Activated CD4-positive, alpha-beta T cell treated with anti-CD3 and anti-CD28 coated beads for 36 hours (primary cell): ENCODE measurements at regions of chr14 and their contacts with region 1.

Region 1: GRCh38 chr14:77067632-77068514 is 30.2 kb upstream of the CIPC start:
- DNase-seq: peak; percentile 80
- ATAC-seq: peak; percentile 74
- H3K4me3 Mint-ChIP-seq: no peak overlapping the region
- H3K27ac Mint-ChIP-seq: no peak overlapping the region
- H3K4me1 Mint-ChIP-seq: no peaks in the 10 kb centered on the region
- H3K27me3 Mint-ChIP-seq: no peaks in the 10 kb centered on the region

Region 2: GRCh38 chr14:76710056-76711010 is 357.5 kb before region 1 on chr14:
- CTCF ChIA-PET with region 1: interaction called, 17 read pairs
- POLR2A ChIA-PET with region 1: no interaction called
- intact Hi-C with region 1: loop called (anchors 2 kb)
- DNase-seq: peak; percentile 51
- ATAC-seq: peak; percentile 49
- H3K4me3 Mint-ChIP-seq: no peak overlapping the region
- H3K27ac Mint-ChIP-seq: no peak overlapping the region
- H3K4me1 Mint-ChIP-seq: no peaks in the 10 kb centered on the region
- H3K27me3 Mint-ChIP-seq: peaks cover 7% of the 10 kb centered on the region

Region 3: DNA sequence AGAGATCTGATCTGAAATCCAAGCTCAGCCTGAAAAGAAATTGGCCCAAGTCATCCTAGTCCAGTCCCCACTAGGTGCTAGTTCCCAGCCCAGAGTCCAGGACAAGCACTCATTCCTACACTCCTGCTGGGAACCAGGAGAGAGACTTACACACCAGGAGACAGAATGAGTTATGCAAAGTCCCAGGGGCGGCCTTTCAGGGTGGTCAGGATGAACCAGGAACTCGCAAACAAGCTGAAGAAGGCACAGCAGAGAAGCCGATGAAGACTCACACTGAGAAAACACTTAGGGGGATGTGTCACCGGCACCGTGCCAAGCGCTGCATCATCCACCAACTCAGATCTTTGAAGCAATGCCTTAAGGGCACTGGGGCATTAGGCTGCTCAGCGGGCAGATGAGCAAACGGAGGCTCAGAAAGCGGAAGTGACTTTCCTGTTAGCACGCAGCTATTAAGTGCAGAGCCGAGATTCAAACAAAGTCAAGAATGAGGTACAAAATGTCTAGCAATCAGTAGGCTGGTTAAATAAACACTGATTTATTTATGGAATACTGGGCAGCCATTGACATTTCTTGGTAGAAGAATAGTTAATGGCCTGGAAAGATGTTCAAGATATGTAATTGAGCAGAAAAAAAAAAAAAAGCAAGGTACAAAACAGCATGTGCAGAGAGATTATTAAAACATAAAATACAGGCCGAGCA is 163.0 kb before region 1 on chr14:
- CTCF ChIA-PET with region 1: interaction called, 23 read pairs
- POLR2A ChIA-PET with region 1: no interaction called
- intact Hi-C with region 1: no loop called
- DNase-seq: peak; percentile 94
- ATAC-seq: peak; percentile 97
- H3K4me3 Mint-ChIP-seq: no peak overlapping the region
- H3K27ac Mint-ChIP-seq: peak overlapping the region; percentile 80
- H3K4me1 Mint-ChIP-seq: peaks cover 31% of the 10 kb centered on the region
- H3K27me3 Mint-ChIP-seq: no peaks in the 10 kb centered on the region

Region 4: DNA sequence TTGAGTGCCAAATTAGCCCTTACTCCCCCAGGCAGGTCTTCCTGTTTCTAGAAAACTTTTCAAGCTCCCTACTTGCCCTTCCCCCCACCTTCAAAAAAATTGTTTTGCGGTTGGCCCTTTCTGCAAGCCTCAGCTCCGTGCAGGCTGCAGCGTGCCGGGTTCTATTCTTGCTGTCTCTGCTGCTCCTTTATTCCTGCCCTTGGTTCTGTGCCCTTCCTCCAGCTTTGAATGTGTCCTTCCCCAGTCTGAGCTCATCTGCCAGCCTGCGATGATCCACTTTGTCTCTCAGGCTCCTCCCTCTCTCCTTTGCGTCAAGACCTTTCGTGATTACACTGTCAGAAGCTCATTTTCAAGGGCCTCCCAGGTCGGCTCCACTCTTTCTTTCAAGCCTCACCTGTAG is 137.9 kb before region 1 on chr14:
- CTCF ChIA-PET with region 1: interaction called, 12 read pairs
- POLR2A ChIA-PET with region 1: no interaction called
- intact Hi-C with region 1: no loop called
- DNase-seq: peak; percentile 79
- ATAC-seq: peak; percentile 91
- H3K4me3 Mint-ChIP-seq: peak overlapping the region; percentile 49
- H3K27ac Mint-ChIP-seq: peak overlapping the region; percentile 80
- H3K4me1 Mint-ChIP-seq: peaks cover 83% of the 10 kb centered on the region
- H3K27me3 Mint-ChIP-seq: no peaks in the 10 kb centered on the region

Region 5: GRCh38 chr14:77086017-77086736 is 18.3 kb after region 1 on chr14:
- CTCF ChIA-PET with region 1: interaction called, 106 read pairs
- POLR2A ChIA-PET with region 1: no interaction called
- intact Hi-C with region 1: no loop called
- DNase-seq: no peak
- ATAC-seq: peak; percentile 83
- H3K4me3 Mint-ChIP-seq: no peak overlapping the region
- H3K27ac Mint-ChIP-seq: no peak overlapping the region
- H3K4me1 Mint-ChIP-seq: peaks cover 16% of the 10 kb centered on the region
- H3K27me3 Mint-ChIP-seq: peaks cover under 1% of the 10 kb centered on the region

Region 6: DNA sequence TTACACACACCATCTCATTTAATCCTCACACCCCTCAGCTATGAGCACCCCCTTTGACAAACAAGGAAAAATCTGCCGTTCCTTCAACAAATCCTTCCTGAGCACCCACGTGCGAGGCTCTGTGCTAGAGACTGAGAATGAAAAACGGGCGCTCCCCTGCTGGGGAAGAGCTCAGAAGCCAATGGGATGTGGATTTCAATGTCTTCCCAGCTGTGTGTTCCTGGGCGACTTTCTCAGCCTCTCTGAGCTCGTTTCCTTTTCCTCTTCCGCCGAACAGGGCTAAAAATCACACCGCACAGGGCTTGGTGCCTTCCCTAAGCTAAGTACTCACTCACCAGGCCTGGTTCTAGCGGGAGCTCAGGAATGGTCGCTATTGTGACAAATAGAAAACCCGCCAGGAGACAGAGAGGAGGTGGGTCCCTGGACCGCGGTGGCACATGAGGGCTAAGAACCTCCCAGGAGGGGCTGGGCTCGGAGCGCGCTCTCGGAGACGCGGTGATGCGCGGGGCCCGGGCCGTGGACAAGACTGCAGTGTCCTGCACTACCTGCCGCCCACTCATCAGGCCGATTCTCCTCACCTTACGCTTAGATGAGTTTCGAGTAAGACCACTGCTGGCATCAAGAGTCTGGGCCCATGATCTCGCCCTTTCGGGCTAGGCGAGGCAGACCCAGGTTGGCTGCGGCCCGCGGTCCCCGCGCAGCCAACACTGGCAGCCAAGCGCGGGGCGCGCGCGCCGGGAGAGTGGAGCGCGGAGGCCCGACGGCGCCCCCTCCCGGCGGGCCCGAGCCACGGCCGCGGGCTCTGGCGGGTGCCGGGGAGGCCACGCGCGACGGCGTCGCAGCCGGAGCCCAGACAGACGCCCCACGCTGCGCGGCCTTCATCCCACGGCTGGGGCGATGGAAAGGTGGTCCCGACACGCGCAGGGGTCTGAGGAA is 56.7 kb after region 1 on chr14:
- CTCF ChIA-PET with region 1: interaction called, 9 read pairs
- POLR2A ChIA-PET with region 1: no interaction called
- intact Hi-C with region 1: loop called in 1 of 2 experiments (anchors 2 kb)
- DNase-seq: peak; percentile 77
- ATAC-seq: peak; percentile 77
- H3K4me3 Mint-ChIP-seq: peak overlapping the region; percentile 68
- H3K27ac Mint-ChIP-seq: peak overlapping the region; percentile 55
- H3K4me1 Mint-ChIP-seq: peaks cover 37% of the 10 kb centered on the region
- H3K27me3 Mint-ChIP-seq: peaks cover 9% of the 10 kb centered on the region